Activated T-helper 1 cell treated with anti-CD3 and anti-CD28 coated beads, Interleukin-12 subunit alpha, Interleukin-12 subunit beta, Interleukin-2, Interleukin-4 antibody, amounts not matched to agents 30 ng/mL and 10 ng/mL and 1 ng/mL, durations not matched to agents 14 hours and 24 hours and 36 hours (primary cell): ENCODE measurements at regions of chr12 and their contacts with region 1.

Region 1: DNA sequence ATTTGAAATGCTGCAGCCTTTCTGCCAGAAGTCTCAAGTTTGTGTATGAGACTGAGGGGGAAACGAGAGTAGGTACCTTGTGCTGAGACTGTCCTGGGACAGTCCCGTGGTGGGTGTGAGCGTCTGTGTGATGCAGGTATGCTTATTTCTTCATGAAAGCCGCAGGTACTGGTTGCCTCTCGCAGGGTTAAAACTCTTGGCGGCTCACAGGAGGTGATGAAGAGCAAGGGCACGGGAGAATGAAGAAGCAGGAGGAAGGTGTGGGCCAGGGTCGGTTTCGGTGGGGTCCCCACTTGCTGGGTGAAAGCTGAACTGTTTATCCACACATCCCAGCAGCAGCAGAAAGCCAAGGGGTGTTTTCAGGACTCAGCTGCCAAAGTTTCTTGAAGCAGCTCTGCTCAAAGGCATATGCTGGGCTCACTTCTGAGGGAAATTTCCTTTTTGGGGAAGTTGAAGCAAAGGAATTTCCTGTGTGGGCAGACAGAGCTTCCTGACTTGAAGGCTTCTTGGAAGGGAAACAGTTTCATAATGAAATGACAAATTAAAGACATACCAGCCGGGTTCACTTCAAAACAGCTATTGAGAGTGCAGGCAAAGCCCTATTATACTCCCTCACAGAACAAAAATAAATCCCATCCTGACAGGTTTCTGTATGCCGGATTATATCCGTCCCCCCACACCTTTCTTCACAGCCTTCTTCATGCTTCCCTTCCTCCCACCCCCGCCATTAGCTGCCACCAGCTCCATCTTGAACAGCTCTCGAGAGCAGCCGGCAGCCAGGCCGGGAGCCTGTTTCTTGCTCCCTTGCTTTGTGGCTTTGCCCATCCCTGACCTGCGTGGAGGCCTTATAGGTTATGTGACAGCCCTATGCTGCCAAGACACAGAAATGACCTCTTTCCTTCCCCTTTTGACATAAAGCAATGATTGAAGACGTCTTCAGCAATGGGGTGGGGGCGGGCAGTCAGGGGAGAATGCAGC is 116.6 kb downstream of the ETV6 start:
- DNase-seq: peak; percentile 19
- H3K4me3 Mint-ChIP-seq: peak overlapping the region; percentile 47
- H3K27ac Mint-ChIP-seq: peak overlapping the region; percentile 93
- H3K4me1 Mint-ChIP-seq: peaks cover 100% of the 10 kb centered on the region
- H3K27me3 Mint-ChIP-seq: no peaks in the 10 kb centered on the region

Region 2: DNA sequence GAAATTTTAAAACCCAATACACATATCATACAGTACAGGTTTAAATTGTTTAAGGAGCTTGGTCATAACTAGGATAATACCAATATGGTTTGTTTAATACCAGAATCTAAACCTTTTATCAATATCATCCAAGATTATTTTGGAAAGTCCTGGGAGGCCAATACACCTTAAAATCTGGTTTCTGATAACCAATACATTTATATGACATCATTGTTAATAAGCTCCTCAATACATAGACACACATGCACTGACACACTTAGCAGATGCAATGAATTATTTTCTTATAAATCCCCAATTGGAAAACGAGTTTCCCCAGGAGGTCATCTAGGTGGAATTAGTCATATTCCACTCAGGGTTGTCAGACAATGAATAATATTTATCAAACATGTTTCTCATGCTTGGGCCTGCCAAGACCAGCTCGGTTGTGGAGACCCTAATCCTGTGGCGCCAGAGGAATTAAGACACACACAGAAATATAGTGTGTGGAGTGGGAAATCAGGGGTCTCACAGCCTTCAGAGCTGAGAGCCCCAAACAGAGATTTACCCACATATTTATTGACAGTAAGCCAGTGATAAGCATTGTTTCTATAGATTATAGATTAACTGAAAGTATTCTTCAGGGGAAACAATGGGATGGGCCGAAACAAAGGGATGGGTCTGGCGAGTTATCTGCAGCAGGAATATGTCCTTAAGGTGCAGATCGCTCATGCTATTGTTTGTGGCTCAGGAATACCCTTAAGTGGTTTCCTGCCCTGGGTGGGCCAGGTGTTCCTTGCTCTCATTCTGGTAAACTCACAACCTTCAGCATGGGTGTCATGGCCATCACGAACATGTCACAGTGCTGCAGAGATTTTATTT is 716.2 kb before region 1 on chr12:
- intact Hi-C with region 1: no loop called
- DNase-seq: no peak
- H3K4me3 Mint-ChIP-seq: no peak overlapping the region
- H3K27ac Mint-ChIP-seq: no peak overlapping the region
- H3K4me1 Mint-ChIP-seq: no peaks in the 10 kb centered on the region
- H3K27me3 Mint-ChIP-seq: no peaks in the 10 kb centered on the region

Region 3: DNA sequence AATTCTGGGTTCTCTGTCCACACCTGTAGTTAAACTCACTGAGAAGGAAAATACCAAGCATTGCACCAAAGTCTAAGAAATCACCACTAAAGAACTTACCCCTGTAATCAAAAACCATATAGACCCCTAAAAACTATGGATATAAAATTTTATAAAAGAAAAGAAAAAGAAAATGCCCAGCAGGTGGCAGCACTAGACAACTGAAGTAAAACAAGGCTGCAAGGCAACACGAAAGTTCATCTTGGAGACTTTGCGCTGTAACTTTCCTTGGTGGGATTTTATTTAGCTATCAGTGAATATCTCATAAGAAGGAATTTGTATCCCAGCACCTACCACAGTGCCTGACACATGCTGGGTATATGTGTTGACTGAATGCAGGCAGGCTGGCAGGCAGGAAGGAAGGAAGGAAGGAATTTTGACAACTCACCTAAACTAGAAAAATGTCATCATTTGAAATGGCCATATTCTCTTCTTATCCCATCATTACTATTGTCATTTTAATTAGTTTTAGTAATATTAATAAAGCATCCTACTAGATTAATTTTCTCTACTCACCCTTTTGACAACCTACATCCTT is 184.8 kb before region 1 on chr12:
- intact Hi-C with region 1: loop called (anchors 1 kb)
- DNase-seq: peak; percentile 20
- H3K4me3 Mint-ChIP-seq: peak overlapping the region; percentile 59
- H3K27ac Mint-ChIP-seq: peak overlapping the region; percentile 80
- H3K4me1 Mint-ChIP-seq: peaks cover 24% of the 10 kb centered on the region
- H3K27me3 Mint-ChIP-seq: peaks cover 7% of the 10 kb centered on the region

Region 4: DNA sequence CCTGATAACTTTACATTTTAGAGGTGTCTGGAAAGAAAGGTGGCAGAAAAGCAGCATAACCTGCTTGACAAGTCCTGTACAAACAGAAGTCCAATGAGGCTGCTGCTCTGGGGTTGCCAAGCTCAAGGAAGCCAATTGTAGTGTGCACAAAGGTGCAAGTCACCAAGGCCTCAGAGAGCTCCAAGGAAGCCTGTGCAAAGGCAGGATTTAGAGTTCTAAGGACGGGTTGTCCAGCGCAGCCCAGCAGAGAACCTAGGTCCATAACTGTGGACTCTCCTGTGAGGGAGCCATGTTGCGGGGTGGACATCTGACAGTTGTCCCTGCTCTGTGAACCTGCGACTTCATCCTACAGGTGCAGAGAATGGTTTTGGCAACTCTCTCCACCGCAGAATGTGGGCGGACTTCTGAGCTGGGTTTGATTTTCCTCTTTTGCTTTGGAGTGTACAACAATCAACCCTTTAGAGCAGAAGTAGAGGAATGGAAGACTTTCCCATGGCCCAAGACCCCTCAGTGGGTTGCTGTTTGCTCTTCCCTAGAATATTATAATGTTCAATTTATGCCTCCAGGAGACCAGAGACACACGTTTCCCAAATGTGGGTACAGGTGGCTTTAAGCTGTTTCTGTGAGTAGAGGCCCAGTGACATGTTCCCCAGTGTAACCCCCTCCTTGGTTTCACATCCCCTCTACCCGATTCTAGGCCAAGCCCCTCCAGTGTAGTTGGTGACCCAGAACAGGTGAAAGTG is 35.6 kb before region 1 on chr12:
- intact Hi-C with region 1: loop called (anchors 1 kb)
- DNase-seq: no peak
- H3K4me3 Mint-ChIP-seq: peak overlapping the region; percentile 66
- H3K27ac Mint-ChIP-seq: peak overlapping the region; percentile 86
- H3K4me1 Mint-ChIP-seq: peaks cover 93% of the 10 kb centered on the region
- H3K27me3 Mint-ChIP-seq: no peaks in the 10 kb centered on the region

Region 5: GRCh38 chr12:11812586-11813427 is 46.7 kb after region 1 on chr12:
- intact Hi-C with region 1: loop called (anchors 2 kb)
- DNase-seq: no peak
- H3K4me3 Mint-ChIP-seq: peak overlapping the region; percentile 69
- H3K27ac Mint-ChIP-seq: peak overlapping the region; percentile 91
- H3K4me1 Mint-ChIP-seq: peaks cover 87% of the 10 kb centered on the region
- H3K27me3 Mint-ChIP-seq: no peaks in the 10 kb centered on the region

Region 6: DNA sequence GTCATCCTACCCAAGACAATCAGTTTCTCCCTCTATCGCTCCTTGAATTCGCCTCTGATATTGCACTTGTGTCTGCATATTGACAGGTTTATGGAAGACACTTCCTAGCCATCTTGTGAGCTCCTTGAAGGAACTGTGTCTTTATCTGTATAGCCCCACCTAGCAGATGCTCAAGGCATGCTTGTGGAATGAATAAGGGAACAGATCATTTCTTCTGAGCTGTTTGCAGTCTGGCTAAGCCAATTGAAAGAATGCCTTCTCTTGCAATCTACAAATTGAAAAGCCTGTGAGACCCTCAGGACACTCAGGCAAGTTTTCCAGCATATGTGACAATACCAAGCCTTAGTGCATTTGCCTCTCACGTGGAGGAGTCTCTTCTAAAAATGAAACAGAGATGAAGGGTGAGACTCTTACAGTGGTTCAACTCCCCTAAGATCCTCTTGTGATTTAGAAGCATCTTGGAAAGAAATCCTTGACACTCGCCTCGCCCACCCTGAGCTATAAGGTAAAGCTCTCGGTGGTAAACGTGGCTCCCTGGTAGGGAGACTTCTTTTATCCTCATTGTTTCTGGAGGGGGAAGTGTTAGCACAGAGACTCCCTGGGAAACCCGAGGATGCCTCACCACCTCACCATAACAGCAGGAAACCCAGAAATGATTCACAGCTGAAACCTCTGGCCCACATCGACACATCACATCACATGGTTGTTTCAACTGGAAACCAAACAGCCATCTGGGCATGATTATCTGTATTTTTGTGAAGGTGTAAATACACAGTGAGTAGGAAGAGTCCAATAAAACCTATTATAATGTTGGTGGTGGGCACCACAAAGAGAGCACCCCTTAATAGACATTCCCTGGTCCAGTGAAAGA is 192.3 kb after region 1 on chr12:
- intact Hi-C with region 1: loop called (anchors 1 kb)
- DNase-seq: peak; percentile 55
- H3K4me3 Mint-ChIP-seq: peak overlapping the region; percentile 29
- H3K27ac Mint-ChIP-seq: peak overlapping the region; percentile 89
- H3K4me1 Mint-ChIP-seq: peaks cover 76% of the 10 kb centered on the region
- H3K27me3 Mint-ChIP-seq: no peaks in the 10 kb centered on the region

Region 7: DNA sequence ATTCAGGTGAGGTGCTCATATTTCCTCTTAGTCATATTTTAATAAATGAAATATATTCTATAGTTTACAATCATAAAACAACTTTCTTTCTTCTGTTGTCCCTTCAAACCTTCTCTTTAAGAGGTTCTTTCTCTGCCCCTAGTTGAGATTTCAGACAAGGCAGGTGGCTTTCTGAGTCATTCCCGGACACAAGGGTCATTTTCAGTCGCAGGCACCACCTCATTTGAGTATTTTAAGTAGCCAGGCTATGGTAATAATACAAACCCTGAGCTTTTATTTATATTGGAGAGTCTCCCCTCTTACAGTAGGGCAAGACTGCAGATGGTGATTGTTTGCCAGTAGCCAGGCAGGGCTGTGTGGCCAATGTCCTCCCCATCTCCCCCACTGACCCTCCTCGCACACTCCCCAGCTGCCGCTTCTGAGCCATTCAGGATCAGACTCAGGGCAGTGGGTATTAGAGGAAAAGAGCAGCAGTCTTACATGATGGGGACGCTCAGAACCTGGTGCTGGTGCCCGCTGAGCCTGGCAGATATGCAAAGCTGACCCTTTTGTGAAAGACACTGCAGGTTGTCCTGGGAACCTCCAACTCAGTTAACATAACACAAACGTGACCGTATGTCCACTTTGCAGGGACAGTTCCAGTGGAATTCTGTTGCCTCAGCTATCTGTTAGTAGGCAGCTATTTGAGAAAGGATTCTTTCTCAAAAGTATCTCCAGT is 203.5 kb after region 1 on chr12:
- intact Hi-C with region 1: no loop called
- DNase-seq: no peak
- H3K4me3 Mint-ChIP-seq: no peak overlapping the region
- H3K27ac Mint-ChIP-seq: no peak overlapping the region
- H3K4me1 Mint-ChIP-seq: peaks cover 36% of the 10 kb centered on the region
- H3K27me3 Mint-ChIP-seq: no peaks in the 10 kb centered on the region